Activated T-helper 1 cell treated with anti-CD3 and anti-CD28 coated beads, Interleukin-12 subunit alpha, Interleukin-12 subunit beta, Interleukin-2, Interleukin-4 antibody, amounts not matched to agents 30 ng/mL and 10 ng/mL and 1 ng/mL, durations not matched to agents 14 hours and 24 hours and 36 hours (primary cell): ENCODE measurements at regions of chr10 and their contacts with region 1.

Region 1: DNA sequence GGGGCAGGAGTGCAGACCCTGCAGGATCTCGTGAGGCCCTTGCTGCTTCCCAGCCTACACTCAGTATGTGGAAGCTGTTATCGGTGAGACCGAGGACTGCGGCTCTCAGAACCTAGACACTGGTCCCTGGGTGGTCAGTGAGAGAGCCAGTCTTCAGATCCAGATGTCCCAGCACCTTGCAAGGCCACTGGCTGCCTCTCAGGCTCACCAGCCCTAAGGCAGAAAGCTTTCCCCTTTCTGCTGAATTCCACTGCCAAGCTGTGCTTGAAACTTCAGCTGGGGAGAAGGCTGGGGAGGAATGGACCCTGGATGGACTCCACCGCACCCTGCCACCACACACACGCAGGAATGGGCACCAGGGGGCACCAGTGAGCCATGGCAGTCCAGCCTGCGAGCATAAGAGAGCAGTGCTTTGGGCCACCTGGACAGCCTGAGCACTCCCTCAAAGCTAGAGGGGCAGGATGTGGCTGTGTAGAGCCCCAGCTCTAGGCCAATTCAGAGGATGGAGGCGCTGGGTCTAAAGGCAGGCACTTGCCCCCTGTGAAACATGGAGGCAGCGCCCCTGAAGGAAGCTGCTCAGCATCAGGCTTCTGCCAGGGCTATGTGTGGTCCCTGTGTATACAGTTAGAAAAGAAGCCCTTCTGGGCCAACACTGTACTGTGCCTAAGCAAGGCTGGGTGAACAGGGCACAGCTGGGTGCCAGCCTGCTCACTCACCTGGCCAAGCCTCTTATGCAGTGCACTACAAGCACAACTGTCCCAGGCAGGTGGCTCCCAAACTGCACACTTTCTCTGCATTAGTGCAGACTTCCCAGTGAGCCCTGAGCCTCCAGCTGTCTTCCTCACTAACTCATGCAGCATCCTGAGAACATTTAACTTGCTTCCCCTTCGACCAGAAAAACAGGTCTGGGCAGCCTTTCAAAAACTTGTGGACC is 21.6 kb downstream of the TMEM72 start:
- DNase-seq: peak; percentile 77
- H3K4me3 Mint-ChIP-seq: no peak overlapping the region
- H3K27ac Mint-ChIP-seq: no peak overlapping the region
- H3K4me1 Mint-ChIP-seq: peaks cover 11% of the 10 kb centered on the region
- H3K27me3 Mint-ChIP-seq: peaks cover 2% of the 10 kb centered on the region

Region 2: DNA sequence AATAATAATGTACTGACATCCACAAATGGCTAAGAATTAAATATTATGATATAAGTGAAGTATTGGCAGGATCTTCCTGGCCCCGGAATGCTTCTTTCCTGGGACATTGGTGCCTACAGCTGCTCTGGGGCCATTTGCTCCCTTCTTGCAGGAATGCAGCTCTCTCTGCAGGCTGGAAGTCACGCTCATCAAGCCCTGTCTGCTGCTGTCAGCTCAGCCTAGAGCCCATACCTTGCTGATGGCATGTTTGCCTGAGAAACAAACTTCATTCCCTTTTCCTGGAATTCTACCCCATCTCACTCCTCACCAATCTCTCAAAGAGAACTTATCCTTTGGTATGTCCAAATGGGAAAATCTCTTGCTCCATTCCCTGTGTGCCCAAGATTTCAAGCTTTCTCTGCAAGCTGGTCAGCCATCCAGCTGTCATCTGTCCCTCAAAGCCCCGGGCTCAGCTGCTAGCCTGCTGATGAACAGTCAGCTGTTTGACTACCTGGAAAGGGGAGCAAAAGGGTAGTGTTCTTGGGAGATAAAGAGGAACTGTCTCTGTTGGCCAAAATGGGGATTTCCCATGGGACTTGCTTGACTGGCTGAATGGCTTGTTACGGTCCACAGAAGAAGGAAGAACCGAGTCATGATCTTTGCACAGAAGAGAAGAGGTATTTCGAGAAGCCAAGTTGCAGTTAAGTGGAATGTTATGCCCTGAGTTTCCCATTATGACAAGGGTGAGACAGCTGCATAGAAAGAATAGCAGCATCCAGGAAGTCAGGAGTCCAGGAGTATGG is 14.8 kb after region 1 on chr10:
- intact Hi-C with region 1: no loop called
- DNase-seq: no peak
- H3K4me3 Mint-ChIP-seq: no peak overlapping the region
- H3K27ac Mint-ChIP-seq: no peak overlapping the region
- H3K4me1 Mint-ChIP-seq: peaks cover 7% of the 10 kb centered on the region
- H3K27me3 Mint-ChIP-seq: peaks cover 5% of the 10 kb centered on the region

Region 3: GRCh38 chr10:44959247-44960087 is 26.7 kb after region 1 on chr10 and contains the start of gene RASSF4:
- intact Hi-C with region 1: loop called (anchors 2 kb)
- DNase-seq: peak; percentile 91
- H3K4me3 Mint-ChIP-seq: peak within 1 kb of the TSS; percentile 87
- H3K27ac Mint-ChIP-seq: peak within 1 kb of the TSS; percentile 73
- H3K4me1 Mint-ChIP-seq: peaks cover 24% of the 10 kb centered on the region
- H3K27me3 Mint-ChIP-seq: no peaks in the 10 kb centered on the region
- total RNA-seq, gene RASSF4: 1.3 and 2.5 TPM in 2 replicates

Region 4: DNA sequence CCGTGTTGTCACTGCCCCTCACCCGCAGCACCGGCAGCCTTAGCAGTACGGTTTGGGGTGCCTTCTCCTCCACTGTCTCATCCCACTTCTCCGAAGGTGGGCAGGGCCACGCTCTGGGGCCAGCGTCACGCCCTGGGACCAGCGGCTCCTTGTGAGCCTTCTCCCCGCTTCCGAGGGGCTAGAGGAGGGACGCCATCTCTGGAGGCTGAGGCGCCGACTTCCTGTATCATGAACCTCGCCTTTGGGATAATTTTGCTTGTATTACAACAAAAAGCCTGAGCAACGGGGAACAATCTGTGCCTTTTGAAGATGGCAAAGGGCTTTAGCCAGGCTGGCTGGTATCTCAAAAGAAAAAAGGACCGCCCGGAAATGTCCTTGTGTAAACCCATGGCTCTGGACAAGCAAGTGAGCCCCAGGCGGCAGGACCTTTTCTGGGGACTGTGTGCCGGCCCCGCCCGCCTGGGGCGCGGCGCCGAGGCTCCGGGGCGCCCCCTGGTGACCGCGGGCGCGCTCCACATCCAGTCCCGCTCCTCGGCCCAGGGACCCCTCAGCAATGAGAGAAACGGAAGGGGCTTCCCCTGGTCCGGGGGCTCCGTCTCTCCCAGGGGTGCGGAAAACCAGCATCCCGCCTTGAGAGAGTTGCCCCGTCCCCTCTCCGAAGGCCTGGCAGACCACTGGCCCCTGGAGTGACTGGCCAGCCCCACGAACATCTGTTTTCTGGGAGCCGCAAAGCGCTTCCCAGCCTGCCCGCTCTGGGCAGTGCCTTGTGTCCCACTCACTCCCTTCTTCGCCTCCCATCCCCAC is 42.0 kb after region 1 on chr10:
- intact Hi-C with region 1: loop called (anchors 1 kb)
- DNase-seq: peak; percentile 66
- H3K4me3 Mint-ChIP-seq: peak overlapping the region; percentile 75
- H3K27ac Mint-ChIP-seq: peak overlapping the region; percentile 40
- H3K4me1 Mint-ChIP-seq: peaks cover 35% of the 10 kb centered on the region
- H3K27me3 Mint-ChIP-seq: no peaks in the 10 kb centered on the region

Region 5: GRCh38 chr10:45000752-45001380 is 68.1 kb after region 1 on chr10 and contains the start of gene ZNF22:
- intact Hi-C with region 1: loop called (anchors 2 kb)
- DNase-seq: peak; percentile 61
- H3K4me3 Mint-ChIP-seq: peak within 1 kb of the TSS; percentile 93
- H3K27ac Mint-ChIP-seq: peak within 1 kb of the TSS; percentile 96
- H3K4me1 Mint-ChIP-seq: peaks cover 34% of the 10 kb centered on the region
- H3K27me3 Mint-ChIP-seq: peaks cover 7% of the 10 kb centered on the region
- total RNA-seq, gene ZNF22: 23.1 and 25.6 TPM in 2 replicates

Region 6: GRCh38 chr10:45008524-45009161 is 75.9 kb after region 1 on chr10:
- intact Hi-C with region 1: loop called (anchors 2 kb)
- DNase-seq: no peak
- H3K4me3 Mint-ChIP-seq: no peak overlapping the region
- H3K27ac Mint-ChIP-seq: no peak overlapping the region
- H3K4me1 Mint-ChIP-seq: no peaks in the 10 kb centered on the region
- H3K27me3 Mint-ChIP-seq: no peaks in the 10 kb centered on the region

Region 7: DNA sequence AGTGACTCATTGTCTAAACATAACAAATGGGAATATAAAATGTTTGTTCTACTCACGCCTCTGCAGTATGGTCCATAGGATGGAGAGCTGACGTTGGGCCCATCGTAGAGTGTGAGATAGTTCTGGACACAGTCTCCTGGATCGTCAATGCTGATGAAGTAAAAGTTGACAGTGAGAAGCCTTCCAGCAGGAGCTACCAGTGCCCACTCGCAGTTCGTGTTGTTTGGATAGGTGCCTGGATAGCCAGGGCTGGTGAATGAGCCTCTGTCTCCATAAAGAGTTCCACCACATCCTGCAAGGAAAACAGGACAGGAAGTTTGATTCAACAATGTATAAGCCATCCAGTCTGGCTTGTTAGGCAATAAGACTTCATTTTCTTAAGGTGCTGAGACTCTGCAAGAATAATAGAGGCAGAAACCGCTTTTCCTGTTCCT is 303.0 kb after region 1 on chr10:
- intact Hi-C with region 1: loop called (anchors 10 kb)
- DNase-seq: no peak
- H3K4me3 Mint-ChIP-seq: no peak overlapping the region
- H3K27ac Mint-ChIP-seq: no peak overlapping the region
- H3K4me1 Mint-ChIP-seq: peaks cover 14% of the 10 kb centered on the region
- H3K27me3 Mint-ChIP-seq: peaks cover 2% of the 10 kb centered on the region